Posterior vena cava (tissue), 2 donors: ENCODE measurements at regions of chr7 and their contacts with region 1.

Region 1: GRCh38 chr7:119421657-119422056 is 851.3 kb upstream of the KCND2 start:
- DNase-seq: no peak

Region 2: GRCh38 chr7:119472408-119473038 is 50.9 kb after region 1 on chr7:
- intact Hi-C with region 1: loop called in 1 of 2 experiments (anchors 2 kb)
- DNase-seq: no peak